ENCODE measurements at regions of chr4 and their contacts with region 1.

Region 1: GRCh38 chr4:4488405-4489404 is 53.1 kb downstream of the STX18 start:
- DNase-seq: peak; percentile 60
- ATAC-seq: peak; percentile 99
- H3K4me3 ChIP-seq: no peak overlapping the region
- H3K27ac ChIP-seq: no peak overlapping the region
- H3K4me1 ChIP-seq: no peaks in the 10 kb centered on the region
- H3K27me3 ChIP-seq: no peaks in the 10 kb centered on the region
- CTCF ChIP-seq: peak; percentile 60 to 94 (median 93); a peak in 5 of 6 replicates
- POLR2A ChIP-seq: no peak
- RAD21 ChIP-seq: peak; percentile 86

Region 2: GRCh38 chr4:5142726-5143125 is 654.0 kb after region 1 on chr4:
- CTCF ChIA-PET with region 1: no interaction called
- POLR2A ChIA-PET with region 1: no interaction called
- RAD21 ChIA-PET with region 1: no interaction called
- intact Hi-C with region 1: loop called (anchors 5 kb)
- DNase-seq: peak; percentile 16
- ATAC-seq: peak; percentile 60
- H3K4me3 ChIP-seq: no peak overlapping the region
- H3K27ac ChIP-seq: no peak overlapping the region
- H3K4me1 ChIP-seq: no peaks in the 10 kb centered on the region
- H3K27me3 ChIP-seq: peaks cover 31% of the 10 kb centered on the region
- CTCF ChIP-seq: peak; percentile 47 to 63 (median 57); a peak in 5 of 6 replicates
- POLR2A ChIP-seq: no peak
- RAD21 ChIP-seq: peak; percentile 58

Measured in HCT116 (cell line).